ENCODE measurements at regions of chr3 and their contacts with region 1.

Region 1: GRCh38 chr3:60081381-60082095 is 1031.7 kb upstream of the CFAP20DC start:
- DNase-seq: no peak
- H3K4me3 Mint-ChIP-seq: peak overlapping the region; percentile 76
- H3K27ac Mint-ChIP-seq: peak overlapping the region; percentile 100
- H3K4me1 Mint-ChIP-seq: peaks cover 64% of the 10 kb centered on the region
- H3K27me3 Mint-ChIP-seq: peaks cover 2% of the 10 kb centered on the region

Region 2: DNA sequence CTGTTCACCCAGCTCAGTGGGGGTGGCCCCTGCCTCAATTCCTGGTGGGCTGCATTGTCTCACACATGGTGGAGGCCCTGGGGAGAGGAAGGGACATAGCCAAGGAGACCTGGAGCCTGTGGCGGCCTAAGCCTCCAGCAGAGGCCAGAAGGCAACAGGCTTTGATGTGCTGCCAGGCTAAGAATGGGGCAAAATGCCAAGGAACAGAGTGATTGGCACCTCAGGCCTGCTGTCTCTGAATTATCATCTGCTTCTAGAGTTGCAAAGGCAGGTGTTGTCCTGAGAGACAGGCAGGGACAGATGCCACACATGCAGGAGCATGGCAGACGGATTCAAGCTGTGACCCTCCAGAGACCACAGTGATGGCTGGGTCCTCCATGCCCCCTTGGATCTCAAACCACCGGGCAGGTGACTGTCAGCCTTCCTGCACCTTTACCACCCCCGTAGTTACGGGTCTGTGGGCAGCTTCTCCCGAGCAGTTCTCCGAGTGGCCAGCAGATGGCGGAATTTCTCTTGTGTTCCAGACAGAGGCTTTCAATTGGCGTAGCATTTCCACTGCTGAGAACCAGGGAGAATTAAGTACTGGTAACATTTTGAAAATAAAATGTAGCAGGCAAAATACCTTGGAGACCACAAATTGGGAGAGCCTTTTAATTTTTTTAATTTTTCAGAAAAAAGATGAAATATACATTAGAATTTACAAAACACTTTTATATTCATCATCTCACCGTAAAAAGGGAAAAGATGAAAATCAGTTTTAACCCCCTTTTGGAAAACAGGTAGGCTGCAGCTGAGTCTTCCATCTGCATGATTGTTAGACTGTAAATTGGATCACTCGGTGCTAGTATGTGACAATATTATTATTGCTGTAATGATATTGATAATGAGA is 506.2 kb before region 1 on chr3:
- intact Hi-C with region 1: loop called (anchors 10 kb)
- DNase-seq: peak; percentile 95
- H3K4me3 Mint-ChIP-seq: no peak overlapping the region
- H3K27ac Mint-ChIP-seq: no peak overlapping the region
- H3K4me1 Mint-ChIP-seq: peaks cover 14% of the 10 kb centered on the region
- H3K27me3 Mint-ChIP-seq: no peaks in the 10 kb centered on the region

Region 3: DNA sequence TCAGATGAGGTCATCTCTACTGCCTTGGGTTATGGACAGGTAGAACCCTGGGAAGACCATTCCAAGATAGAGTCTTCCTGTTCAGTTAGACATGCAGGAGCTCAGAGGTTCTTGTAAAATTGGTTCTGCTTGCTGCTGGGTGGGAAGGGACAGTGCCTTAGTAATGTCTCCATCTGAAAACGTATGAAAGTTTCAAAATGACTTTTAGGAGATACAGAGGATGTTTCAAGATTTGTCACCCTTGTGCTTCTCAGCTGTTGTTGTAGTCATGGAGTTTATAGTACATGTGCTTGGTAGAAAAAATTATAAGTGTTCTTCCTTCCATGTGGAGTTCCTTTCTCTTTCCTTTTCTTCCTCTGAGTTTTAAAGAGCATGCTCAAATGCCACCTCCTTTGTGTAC is 146.5 kb before region 1 on chr3:
- intact Hi-C with region 1: loop called (anchors 2 kb)
- DNase-seq: peak; percentile 62
- H3K4me3 Mint-ChIP-seq: peak overlapping the region; percentile 58
- H3K27ac Mint-ChIP-seq: peak overlapping the region; percentile 88
- H3K4me1 Mint-ChIP-seq: peaks cover 28% of the 10 kb centered on the region
- H3K27me3 Mint-ChIP-seq: no peaks in the 10 kb centered on the region

Region 4: DNA sequence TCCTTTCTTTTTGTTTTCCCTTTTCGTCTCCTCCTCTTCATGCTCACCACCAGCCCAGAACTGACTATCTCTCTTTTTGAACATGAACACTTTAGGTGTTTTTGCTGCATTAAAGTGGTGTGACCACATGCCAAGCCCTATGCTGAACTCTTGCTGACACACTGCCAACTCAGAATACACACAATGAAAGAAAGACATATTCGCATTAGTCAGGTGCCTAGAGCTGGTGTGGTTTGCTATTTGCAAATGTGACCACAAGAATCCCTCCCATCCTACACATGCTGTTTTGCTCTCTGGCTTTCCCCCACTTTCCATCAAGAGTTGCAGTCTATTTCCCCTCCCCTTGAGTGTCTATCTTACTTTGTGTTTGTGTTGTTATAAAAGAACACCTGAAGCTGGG is 63.9 kb before region 1 on chr3:
- intact Hi-C with region 1: loop called (anchors 1 kb)
- DNase-seq: peak; percentile 89
- H3K4me3 Mint-ChIP-seq: peak overlapping the region; percentile 73
- H3K27ac Mint-ChIP-seq: peak overlapping the region; percentile 94
- H3K4me1 Mint-ChIP-seq: peaks cover 51% of the 10 kb centered on the region
- H3K27me3 Mint-ChIP-seq: no peaks in the 10 kb centered on the region

Region 5: GRCh38 chr3:60053526-60054265 is 27.8 kb before region 1 on chr3:
- intact Hi-C with region 1: loop called (anchors 1 kb)
- DNase-seq: peak; percentile 72
- H3K4me3 Mint-ChIP-seq: peak overlapping the region; percentile 61
- H3K27ac Mint-ChIP-seq: peak overlapping the region; percentile 93
- H3K4me1 Mint-ChIP-seq: peaks cover 78% of the 10 kb centered on the region
- H3K27me3 Mint-ChIP-seq: no peaks in the 10 kb centered on the region

Region 6: GRCh38 chr3:60192297-60193114 is 111.0 kb after region 1 on chr3:
- intact Hi-C with region 1: loop called (anchors 1 kb)
- DNase-seq: peak; percentile 70
- H3K4me3 Mint-ChIP-seq: peak overlapping the region; percentile 45
- H3K27ac Mint-ChIP-seq: peak overlapping the region; percentile 90
- H3K4me1 Mint-ChIP-seq: peaks cover 48% of the 10 kb centered on the region
- H3K27me3 Mint-ChIP-seq: no peaks in the 10 kb centered on the region

Region 7: DNA sequence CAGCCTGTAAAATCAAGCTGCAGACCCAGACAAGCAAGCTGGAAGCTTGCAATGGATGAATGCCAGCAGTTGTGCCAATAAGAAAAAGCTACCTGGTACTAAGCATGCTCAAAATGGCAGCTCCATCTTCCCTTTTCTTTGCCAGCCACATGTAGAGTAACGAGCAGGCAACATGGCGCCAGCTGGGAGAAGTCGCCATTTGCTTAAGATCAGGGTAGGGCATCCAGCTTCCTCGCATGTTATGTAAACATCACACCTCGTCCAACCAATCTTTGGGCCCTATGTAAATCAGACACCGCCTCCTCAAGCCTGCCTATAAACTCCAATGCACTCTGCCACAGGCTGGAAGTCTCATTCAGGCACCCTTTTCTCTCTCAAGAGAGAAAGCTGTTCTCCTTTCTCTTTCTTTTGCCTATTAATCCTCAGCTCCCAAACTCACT is 195.8 kb after region 1 on chr3:
- intact Hi-C with region 1: no loop called
- DNase-seq: no peak
- H3K4me3 Mint-ChIP-seq: no peak overlapping the region
- H3K27ac Mint-ChIP-seq: no peak overlapping the region
- H3K4me1 Mint-ChIP-seq: no peaks in the 10 kb centered on the region
- H3K27me3 Mint-ChIP-seq: no peaks in the 10 kb centered on the region

Region 8: GRCh38 chr3:61251174-61251972 is 1169.8 kb after region 1 on chr3 and contains the start of gene FHIT:
- intact Hi-C with region 1: loop called (anchors 5 kb)
- DNase-seq: peak; percentile 98
- H3K4me3 Mint-ChIP-seq: peak within 1 kb of the TSS; percentile 87
- H3K27ac Mint-ChIP-seq: peak within 1 kb of the TSS; percentile 89
- H3K4me1 Mint-ChIP-seq: peaks cover 19% of the 10 kb centered on the region
- H3K27me3 Mint-ChIP-seq: peaks cover 2% of the 10 kb centered on the region
- total RNA-seq, gene FHIT: 23.8 and 27.7 TPM in 2 replicates